Heart left ventricle (tissue), 16 donors: ENCODE measurements at regions of chr2 and their contacts with region 1.

Region 1: DNA sequence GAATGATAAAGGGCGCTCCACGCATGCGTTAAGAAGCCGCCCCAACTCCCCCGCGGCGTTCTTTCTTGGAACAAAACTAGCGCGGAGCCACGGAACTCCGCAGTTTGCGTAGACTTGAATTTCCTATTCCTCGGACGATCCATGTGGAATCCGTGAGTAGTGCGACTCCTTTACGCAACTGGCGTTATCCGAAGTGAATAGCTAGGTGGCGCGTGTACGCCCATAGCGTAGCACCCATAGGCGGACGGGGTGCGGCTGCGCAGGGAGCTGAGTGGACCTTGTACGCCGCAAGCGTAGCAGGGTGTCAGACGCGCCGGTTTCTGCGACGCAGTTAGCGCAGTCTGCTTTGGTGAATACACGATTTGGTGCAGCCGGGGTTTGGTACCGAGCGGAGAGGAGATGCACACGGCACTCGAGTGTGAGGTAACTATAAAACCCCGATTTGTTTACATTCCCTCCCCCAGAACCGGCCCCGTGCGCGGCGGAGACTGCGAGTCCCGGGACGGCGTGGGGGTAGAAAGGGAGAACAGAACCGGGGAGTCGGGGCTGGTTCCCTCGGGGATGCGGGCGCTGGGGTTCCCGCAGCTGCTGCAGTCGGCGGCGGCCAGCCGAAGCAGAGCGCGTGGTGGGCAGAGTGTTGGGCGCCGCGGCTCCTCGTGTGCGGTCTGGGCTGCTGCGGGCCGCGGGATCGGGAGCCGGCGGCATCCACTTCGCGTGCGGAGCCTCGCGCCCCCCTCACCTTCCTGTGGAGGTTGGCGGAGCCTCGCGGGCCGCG is at the start of gene SLC39A10:
- DNase-seq: peak; percentile 96 to 98 (median 97)
- ATAC-seq: peak; percentile 88 to 94 (median 92)
- H3K4me3 ChIP-seq: peak within 1 kb of the TSS; percentile 67 to 96 (median 93)
- H3K27ac ChIP-seq: peak within 1 kb of the TSS; percentile 89 to 99 (median 98)
- H3K4me1 ChIP-seq: peaks cover 0 to 37% (median 15%) of the 10 kb centered on the region in 12 donors
- H3K27me3 ChIP-seq: no peaks in the 10 kb centered on the region
- CTCF ChIP-seq: peak in 6 of 12 donors; percentile 14 to 39 (median 29)
- POLR2A ChIP-seq: peak; percentile 47 to 93
- total RNA-seq, gene SLC39A10: 4.0 to 18.2 (median 9.2) TPM

Region 2: GRCh38 chr2:195498176-195498575 is 158.9 kb before region 1 on chr2:
- intact Hi-C with region 1: loop called in 5 of 10 experiments (anchors 2 to 10 kb)
- DNase-seq: peak in 2 of 5 donors; percentile 30 to 33
- ATAC-seq: no peak
- H3K4me3 ChIP-seq: no peak overlapping the region
- H3K27ac ChIP-seq: no peak overlapping the region
- H3K4me1 ChIP-seq: no peaks in the 10 kb centered on the region
- H3K27me3 ChIP-seq: no peaks in the 10 kb centered on the region
- CTCF ChIP-seq: peak in 8 of 12 donors; percentile 14 to 47 (median 32)
- POLR2A ChIP-seq: no peak

Region 3: DNA sequence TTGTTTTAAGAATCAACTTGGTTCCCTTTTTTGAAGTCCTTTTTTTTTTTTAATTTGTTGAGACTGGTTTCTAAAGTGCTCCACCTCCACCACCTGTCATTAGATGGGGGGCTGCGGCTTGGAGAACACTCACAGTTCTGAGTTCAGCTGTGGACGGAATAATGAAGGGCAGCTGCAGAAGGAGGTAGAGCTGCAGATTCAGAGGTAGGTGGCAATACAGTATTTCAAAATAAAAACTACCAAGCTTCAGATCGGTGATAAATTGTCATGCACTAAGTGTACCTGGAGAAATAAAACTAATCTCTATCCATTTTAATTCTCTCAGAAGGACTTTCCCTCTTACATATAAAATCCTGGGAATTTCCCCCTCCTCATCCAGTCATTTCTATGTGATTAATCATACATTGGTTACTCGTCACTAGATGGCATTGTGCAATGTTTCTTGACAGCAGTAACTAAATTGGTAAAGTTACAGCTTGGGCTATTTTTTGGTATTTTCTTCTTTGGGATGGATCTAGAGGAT is 81.1 kb before region 1 on chr2:
- intact Hi-C with region 1: loop called in 9 of 10 experiments (anchors 2 to 5 kb)
- DNase-seq: no peak
- ATAC-seq: peak in 1 of 4 donors; percentile 62
- H3K4me3 ChIP-seq: no peak overlapping the region
- H3K27ac ChIP-seq: no peak overlapping the region
- H3K4me1 ChIP-seq: peaks cover 0 to 35% (median 0%) of the 10 kb centered on the region in 12 donors
- H3K27me3 ChIP-seq: no peaks in the 10 kb centered on the region
- CTCF ChIP-seq: peak in 9 of 12 donors; percentile 14 to 58 (median 48)
- POLR2A ChIP-seq: no peak

Region 4: DNA sequence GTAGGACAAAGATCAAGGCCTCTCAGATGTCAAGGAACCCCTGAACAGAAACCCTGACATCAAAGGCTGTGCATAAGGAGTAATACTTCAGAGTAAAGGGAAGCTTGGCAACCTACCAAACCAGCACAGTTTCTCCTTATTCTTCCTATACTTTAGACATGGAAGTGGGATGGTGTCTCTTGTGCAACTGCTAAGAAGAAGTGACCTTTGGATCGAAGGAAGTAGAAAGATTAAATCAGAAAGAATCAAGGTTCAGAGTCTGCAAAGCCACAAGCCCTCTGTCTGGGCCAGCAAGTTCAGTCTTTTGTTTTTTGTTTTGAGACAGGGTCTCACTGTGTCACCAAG is 66.2 kb before region 1 on chr2:
- intact Hi-C with region 1: loop called in 2 of 10 experiments (anchors 1 to 5 kb)
- DNase-seq: no peak
- ATAC-seq: peak in 1 of 4 donors; percentile 18
- H3K4me3 ChIP-seq: no peak overlapping the region
- H3K27ac ChIP-seq: peak overlapping the region in 9 of 12 donors; percentile 19 to 79 (median 61)
- H3K4me1 ChIP-seq: peaks cover 0 to 27% (median 2%) of the 10 kb centered on the region in 12 donors
- H3K27me3 ChIP-seq: no peaks in the 10 kb centered on the region
- CTCF ChIP-seq: no peak
- POLR2A ChIP-seq: no peak

Region 5: GRCh38 chr2:196068271-196069209 is 411.5 kb after region 1 on chr2 and contains the start of gene DNAH7:
- intact Hi-C with region 1: loop called in 4 of 10 experiments (anchors 5 to 10 kb)
- DNase-seq: peak; percentile 87 to 94 (median 92)
- ATAC-seq: peak; percentile 95 to 99 (median 98)
- H3K4me3 ChIP-seq: peak within 1 kb of the TSS; percentile 60 to 90 (median 75)
- H3K27ac ChIP-seq: peak within 1 kb of the TSS in 7 of 12 donors; percentile 6 to 51 (median 20)
- H3K4me1 ChIP-seq: peaks cover 0 to 17% (median 6%) of the 10 kb centered on the region in 12 donors
- H3K27me3 ChIP-seq: no peaks in the 10 kb centered on the region
- CTCF ChIP-seq: peak in 7 of 12 donors; percentile 22 to 95 (median 82)
- POLR2A ChIP-seq: peak in 1 of 2 donors; percentile 38
- total RNA-seq, gene DNAH7: 0.11 to 1.5 (median 0.40) TPM in 8 of 9 donors, not detected in the other